ENCODE measurements at regions of chr16 and their contacts with region 1.

Region 1: GRCh38 chr16:75464130-75464918 is at the start of gene TMEM170A:
- DNase-seq: peak; percentile 97
- CTCF ChIP-seq: peak; percentile 100

Region 2: GRCh38 chr16:75432828-75433731 is 31.2 kb before region 1 on chr16 and contains the start of gene CFDP1:
- CTCF ChIA-PET with region 1: interaction called, 23 read pairs
- POLR2A ChIA-PET with region 1: interaction called, 4 read pairs
- DNase-seq: peak; percentile 98
- CTCF ChIP-seq: peak; percentile 2

Region 3: GRCh38 chr16:75452464-75453190 is 11.7 kb before region 1 on chr16:
- CTCF ChIA-PET with region 1: interaction called, 12 read pairs
- POLR2A ChIA-PET with region 1: no interaction called
- DNase-seq: no peak
- CTCF ChIP-seq: no peak

Region 4: GRCh38 chr16:75495076-75495674 is 30.9 kb after region 1 on chr16 and contains the start of gene CHST6:
- CTCF ChIA-PET with region 1: interaction called, 258 read pairs
- POLR2A ChIA-PET with region 1: no interaction called
- DNase-seq: peak; percentile 86
- CTCF ChIP-seq: no peak

Region 5: DNA sequence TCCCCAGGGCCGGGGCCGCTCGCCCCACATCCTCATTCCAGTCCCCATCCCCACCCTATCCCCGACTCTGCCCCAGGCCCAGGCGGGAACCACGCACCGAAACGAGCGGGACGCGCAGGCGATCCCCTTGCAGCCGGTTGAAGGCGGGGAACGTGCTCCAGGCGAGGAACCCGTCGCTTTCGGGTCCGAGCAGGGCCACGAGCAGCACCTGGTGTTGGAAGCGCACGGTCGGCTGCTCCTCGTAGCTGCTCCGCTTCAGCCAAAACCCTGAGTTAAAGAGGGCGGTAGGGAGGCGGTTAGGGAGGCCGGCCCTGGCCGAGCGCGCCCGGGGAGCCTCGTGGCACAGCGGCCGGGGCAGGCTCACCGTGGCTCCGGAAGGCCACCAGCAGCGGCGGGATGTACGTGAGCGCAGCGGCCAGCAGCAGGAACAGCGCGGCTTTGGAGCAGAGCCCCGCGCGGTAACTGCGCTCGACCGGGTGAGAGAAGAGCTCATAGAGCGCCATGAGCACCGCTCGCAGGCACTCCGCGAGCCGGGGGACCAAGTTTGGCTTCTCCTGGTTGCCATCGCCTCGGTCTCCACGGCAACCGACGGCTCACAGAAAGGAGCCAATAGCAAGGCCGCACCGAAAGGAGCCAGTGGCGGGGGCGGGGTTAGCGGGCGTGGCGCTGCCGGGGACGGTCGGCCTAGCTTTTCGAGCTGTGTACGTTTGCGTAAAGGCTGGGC is 91.5 kb after region 1 on chr16 and contains the start of gene TMEM231:
- CTCF ChIA-PET with region 1: interaction called, 15 read pairs
- POLR2A ChIA-PET with region 1: no interaction called
- DNase-seq: peak; percentile 97
- CTCF ChIP-seq: no peak